ENCODE measurements at regions of chr17 and their contacts with region 1.

Region 1: DNA sequence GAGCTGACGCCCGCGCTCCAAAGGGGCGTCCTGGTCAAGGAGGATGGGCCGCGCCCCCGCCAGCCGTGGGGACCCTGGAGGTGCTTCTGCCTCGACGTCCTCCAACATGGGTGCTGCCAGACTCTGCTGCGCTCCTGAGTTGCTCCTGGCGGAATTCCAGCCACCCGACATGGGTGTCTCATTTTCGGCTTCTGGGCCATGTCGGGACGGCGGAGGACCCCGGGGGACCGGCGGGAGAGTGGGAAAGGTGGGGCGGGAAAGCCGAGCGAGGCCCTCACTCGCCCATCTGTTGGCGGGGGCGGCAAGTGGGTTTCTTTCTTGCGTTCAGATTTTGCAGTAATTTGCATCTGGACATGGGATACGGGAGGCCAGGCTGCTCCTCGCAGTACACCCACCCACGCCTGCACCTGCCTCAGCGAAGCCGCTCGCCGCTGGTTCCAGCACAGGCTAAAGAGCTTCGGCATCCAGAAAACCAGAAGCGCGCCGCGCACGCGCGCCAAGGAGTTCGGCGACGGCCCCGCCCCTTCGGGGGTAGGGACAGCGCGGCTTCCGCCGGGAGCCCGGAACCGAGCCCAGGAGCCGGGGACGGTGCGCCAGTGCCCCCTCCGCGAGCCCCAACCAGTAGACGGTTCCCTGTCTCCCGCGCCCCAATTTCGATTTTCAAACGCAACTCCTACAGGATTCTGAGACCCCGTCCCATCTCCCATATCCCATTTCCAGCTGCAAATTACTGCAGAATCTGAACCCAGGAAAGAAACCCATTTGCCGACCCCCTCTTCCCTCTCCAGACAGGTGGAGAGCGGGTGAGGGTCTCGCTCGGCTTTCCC is at the start of gene ARMC7:
- DNase-seq: peak; percentile 93
- H3K4me3 Mint-ChIP-seq: peak within 1 kb of the TSS; percentile 93
- H3K27ac Mint-ChIP-seq: peak within 1 kb of the TSS; percentile 84
- H3K4me1 Mint-ChIP-seq: peaks cover 36% of the 10 kb centered on the region
- H3K27me3 Mint-ChIP-seq: no peaks in the 10 kb centered on the region
- total RNA-seq, gene ARMC7: 11.6 and 13.0 TPM in 2 replicates

Region 2: GRCh38 chr17:74815550-74816370 is 293.9 kb before region 1 on chr17:
- intact Hi-C with region 1: no loop called
- DNase-seq: no peak
- H3K4me3 Mint-ChIP-seq: no peak overlapping the region
- H3K27ac Mint-ChIP-seq: no peak overlapping the region
- H3K4me1 Mint-ChIP-seq: no peaks in the 10 kb centered on the region
- H3K27me3 Mint-ChIP-seq: no peaks in the 10 kb centered on the region

Region 3: DNA sequence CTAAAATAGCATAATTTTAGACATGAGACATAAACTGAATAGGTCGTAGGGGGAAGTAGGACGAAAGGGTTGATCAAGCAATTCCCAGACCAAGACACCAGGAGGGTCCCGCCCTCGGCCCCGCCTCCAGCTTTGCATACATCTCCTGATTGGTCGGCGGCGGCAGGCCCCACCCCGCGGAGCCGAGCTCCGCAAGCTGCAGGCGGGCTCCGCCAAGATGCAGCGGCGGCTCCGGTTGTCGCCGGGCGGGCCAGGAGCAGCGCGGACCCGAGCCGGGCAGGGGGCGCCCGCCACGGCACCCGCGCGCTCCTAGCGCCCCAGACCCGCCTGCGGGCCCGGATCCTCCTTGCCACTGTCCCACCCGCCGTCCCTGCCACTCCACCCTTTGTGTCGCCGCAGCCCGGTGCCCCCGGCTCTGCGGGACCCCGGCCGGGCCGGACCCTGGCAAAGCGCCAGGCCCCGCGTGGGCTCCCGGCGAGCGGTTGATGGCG is 122.2 kb before region 1 on chr17 and contains the start of gene CDR2L:
- intact Hi-C with region 1: loop called (anchors 1 kb)
- DNase-seq: peak; percentile 89
- H3K4me3 Mint-ChIP-seq: peak within 1 kb of the TSS; percentile 83
- H3K27ac Mint-ChIP-seq: no peak within 1 kb of the TSS
- H3K4me1 Mint-ChIP-seq: peaks cover 7% of the 10 kb centered on the region
- H3K27me3 Mint-ChIP-seq: peaks cover 54% of the 10 kb centered on the region
- total RNA-seq, gene CDR2L: 1.1 and 1.3 TPM in 2 replicates

Region 4: GRCh38 chr17:75077496-75078283 is 31.9 kb before region 1 on chr17:
- intact Hi-C with region 1: loop called (anchors 2 kb)
- DNase-seq: peak; percentile 24
- H3K4me3 Mint-ChIP-seq: peak overlapping the region; percentile 52
- H3K27ac Mint-ChIP-seq: peak overlapping the region; percentile 29
- H3K4me1 Mint-ChIP-seq: peaks cover 11% of the 10 kb centered on the region
- H3K27me3 Mint-ChIP-seq: no peaks in the 10 kb centered on the region

Region 5: GRCh38 chr17:75154195-75155106 is 44.8 kb after region 1 on chr17 and contains the start of gene JPT1:
- intact Hi-C with region 1: loop called (anchors 1 kb)
- DNase-seq: peak; percentile 97
- H3K4me3 Mint-ChIP-seq: peak within 1 kb of the TSS; percentile 97
- H3K27ac Mint-ChIP-seq: peak within 1 kb of the TSS; percentile 93
- H3K4me1 Mint-ChIP-seq: peaks cover 34% of the 10 kb centered on the region
- H3K27me3 Mint-ChIP-seq: no peaks in the 10 kb centered on the region
- total RNA-seq, gene JPT1: 271 and 299 TPM in 2 replicates

Region 6: DNA sequence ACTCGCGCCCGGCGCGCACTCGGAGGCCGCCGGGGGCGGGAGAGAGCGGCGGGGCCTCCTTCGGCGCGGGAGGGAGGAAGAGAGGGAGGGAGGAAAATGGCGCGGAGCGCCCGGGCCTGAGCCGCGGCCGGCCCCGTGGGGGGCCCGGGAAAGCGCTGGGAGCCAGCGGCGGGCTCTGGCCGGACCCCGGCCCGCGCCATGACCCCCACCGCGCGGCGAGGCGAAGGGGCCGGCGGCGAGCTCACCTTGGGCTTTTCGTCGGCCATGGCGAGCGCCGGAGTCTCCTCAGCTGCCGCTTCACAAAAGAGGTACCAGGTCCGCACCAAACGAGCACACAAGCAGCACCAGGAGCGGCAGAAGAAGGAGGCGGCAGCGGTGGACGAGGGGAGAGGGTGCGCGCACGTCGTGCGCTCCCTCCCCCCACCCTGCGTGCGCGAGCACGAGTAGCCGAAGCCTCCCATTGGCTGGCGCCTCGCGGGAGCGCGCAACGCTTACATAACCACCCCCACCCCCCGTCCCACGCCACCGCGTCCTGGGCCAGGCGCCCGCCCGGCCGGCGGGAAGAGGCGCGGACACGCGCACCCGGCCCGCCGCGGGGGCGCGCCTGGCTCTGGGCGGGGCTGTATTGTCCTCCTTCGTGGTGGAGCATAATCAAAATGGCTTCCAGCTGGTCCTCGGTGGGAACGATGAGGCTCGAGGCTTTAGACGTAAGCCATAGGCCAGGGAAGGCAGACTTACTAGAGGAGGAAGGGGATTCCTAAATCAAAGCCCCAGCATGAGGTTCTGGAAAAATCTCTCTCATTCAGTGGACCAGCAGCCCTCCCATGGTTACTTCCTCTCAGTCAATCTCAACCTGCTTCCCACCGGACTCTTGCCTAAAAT is 73.2 kb after region 1 on chr17 and contains the start of gene SUMO2:
- intact Hi-C with region 1: no loop called
- DNase-seq: peak; percentile 93
- H3K4me3 Mint-ChIP-seq: peak within 1 kb of the TSS; percentile 99
- H3K27ac Mint-ChIP-seq: peak within 1 kb of the TSS; percentile 98
- H3K4me1 Mint-ChIP-seq: peaks cover 38% of the 10 kb centered on the region
- H3K27me3 Mint-ChIP-seq: no peaks in the 10 kb centered on the region
- total RNA-seq, gene SUMO2: 649 and 656 TPM in 2 replicates

Region 7: DNA sequence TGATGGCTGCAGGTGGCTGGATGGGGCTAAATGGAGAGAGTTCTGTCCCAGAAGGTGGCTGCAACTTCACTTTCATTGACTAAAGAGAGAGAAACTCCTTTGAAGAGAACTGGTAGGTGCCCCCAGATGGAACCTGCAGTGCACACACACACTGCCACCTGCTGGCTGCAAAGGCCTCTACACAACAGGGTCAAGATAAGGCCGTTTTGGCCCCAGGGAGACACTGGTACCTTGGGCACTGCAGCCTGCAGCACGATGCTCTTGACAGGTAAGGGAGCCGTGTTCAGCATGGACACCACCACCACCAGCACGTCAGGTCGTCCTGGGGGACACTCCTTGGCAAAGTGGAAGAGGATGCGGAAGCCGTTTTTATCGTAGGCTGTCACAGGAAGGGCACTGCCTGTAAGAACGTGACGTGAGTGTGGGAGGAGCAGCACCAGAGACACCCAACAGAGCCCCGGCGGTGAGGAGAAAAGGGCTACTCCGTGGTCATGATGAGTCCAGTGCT is 129.1 kb after region 1 on chr17:
- intact Hi-C with region 1: loop called (anchors 1 kb)
- DNase-seq: peak; percentile 35
- H3K4me3 Mint-ChIP-seq: peak overlapping the region; percentile 38
- H3K27ac Mint-ChIP-seq: peak overlapping the region; percentile 76
- H3K4me1 Mint-ChIP-seq: peaks cover 35% of the 10 kb centered on the region
- H3K27me3 Mint-ChIP-seq: no peaks in the 10 kb centered on the region